ENCODE measurements at regions of chr15 and their contacts with region 1.

Region 1: GRCh38 chr15:91302588-91303439 is 202.8 kb downstream of the SV2B start:
- DNase-seq: peak; percentile 26
- H3K4me3 ChIP-seq: no peak overlapping the region
- H3K27ac ChIP-seq: no peak overlapping the region
- H3K4me1 ChIP-seq: no peaks in the 10 kb centered on the region
- H3K27me3 ChIP-seq: no peaks in the 10 kb centered on the region
- CTCF ChIP-seq: peak; percentile 59

Region 2: DNA sequence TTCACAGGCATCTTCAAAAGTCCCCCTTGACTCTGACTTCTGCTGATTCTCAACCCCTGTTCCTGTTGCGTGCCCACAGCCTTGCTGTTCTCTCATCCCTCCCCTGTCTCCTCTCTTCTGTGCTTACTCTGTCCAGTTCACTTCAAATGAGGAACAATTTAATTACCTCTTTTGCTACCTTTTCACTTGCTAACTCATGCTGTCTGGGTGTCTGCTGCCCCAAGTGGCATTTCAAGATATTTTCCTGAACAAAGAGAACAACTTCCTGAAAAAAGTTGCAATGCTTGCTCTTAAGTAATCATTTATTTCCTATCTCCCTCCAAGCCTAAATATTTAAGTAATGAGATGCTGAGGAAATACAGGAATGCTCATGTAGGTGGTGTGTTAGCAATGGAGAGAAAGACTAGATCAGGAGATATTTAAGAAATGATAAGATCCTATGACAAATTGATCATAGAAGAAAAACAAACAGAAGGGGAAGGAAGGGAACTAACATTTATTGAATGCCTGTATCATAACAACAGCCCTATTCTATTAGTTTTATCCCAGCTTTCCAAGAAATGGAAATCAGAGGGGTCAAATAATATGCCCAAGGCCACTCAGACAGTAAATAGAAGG is 160.6 kb before region 1 on chr15:
- intact Hi-C with region 1: no loop called
- DNase-seq: no peak
- H3K4me3 ChIP-seq: no peak overlapping the region
- H3K27ac ChIP-seq: no peak overlapping the region
- H3K4me1 ChIP-seq: no peaks in the 10 kb centered on the region
- H3K27me3 ChIP-seq: no peaks in the 10 kb centered on the region
- CTCF ChIP-seq: peak; percentile 28

Region 3: DNA sequence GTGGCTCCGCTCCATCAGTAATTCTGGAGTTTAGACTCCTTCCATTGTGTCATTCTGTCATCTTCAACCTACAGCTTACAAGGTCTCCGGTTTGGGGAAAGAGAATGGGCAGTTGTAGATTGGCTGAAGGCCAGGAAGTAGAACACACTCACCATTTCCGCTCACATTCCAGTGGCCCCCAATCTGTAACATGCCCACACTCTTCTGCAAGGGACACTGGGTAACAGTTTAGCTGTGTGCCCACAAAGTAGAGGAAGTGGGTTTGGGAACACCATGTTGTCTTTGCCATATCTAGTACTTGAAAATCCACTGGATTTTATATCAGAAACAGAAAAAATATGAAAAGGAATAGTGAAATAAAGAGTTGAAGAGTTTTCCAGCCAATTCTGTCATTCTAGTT is 49.2 kb before region 1 on chr15:
- intact Hi-C with region 1: no loop called
- DNase-seq: no peak
- H3K4me3 ChIP-seq: no peak overlapping the region
- H3K27ac ChIP-seq: no peak overlapping the region
- H3K4me1 ChIP-seq: no peaks in the 10 kb centered on the region
- H3K27me3 ChIP-seq: no peaks in the 10 kb centered on the region
- CTCF ChIP-seq: no peak

Region 4: GRCh38 chr15:91522663-91523332 is 220.0 kb after region 1 on chr15:
- intact Hi-C with region 1: loop called (anchors 10 kb)
- DNase-seq: no peak
- H3K4me3 ChIP-seq: no peak overlapping the region
- H3K27ac ChIP-seq: no peak overlapping the region
- H3K4me1 ChIP-seq: no peaks in the 10 kb centered on the region
- H3K27me3 ChIP-seq: no peaks in the 10 kb centered on the region
- CTCF ChIP-seq: no peak

Region 5: GRCh38 chr15:91852741-91853510 is 550.1 kb after region 1 on chr15:
- intact Hi-C with region 1: loop called (anchors 5 kb)
- DNase-seq: peak; percentile 75
- H3K4me3 ChIP-seq: peak overlapping the region; percentile 68
- H3K27ac ChIP-seq: peak overlapping the region; percentile 77
- H3K4me1 ChIP-seq: no peaks in the 10 kb centered on the region
- H3K27me3 ChIP-seq: no peaks in the 10 kb centered on the region
- CTCF ChIP-seq: peak; percentile 55

Region 6: DNA sequence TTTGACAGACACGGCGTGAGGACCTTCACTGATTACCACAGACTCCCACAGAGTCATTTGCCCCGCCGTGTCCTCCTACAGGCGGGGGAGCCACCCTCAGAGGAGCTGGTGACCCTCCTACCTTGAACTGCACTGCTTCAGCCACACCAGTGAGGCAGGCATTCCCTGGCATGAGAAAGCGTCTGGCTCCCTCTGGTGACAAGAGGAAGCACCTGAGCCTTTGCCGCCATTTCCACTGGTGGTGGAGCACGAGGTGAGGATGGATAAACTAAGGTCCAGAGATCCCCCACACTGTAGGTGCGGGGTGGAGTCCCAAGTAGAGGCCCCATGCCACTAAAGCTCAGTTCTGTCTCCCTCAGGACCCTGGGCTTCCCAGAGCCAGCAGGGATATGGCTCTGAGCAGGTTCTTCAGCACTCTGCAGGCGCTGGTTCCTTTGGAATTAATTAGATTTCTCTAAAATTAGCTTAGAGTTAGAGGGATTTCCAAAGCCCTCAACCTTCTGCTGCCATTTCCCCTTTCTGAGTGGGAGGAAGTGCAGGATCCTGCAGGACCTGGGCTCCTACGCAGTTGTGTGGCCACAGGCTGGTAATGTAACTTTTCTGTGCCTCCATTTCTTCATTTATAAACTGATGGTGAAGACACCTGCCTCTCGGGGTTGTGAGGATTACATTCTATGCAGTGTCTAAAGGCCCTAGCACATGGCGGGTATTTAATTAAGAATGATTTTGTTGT is 774.7 kb after region 1 on chr15:
- intact Hi-C with region 1: loop called (anchors 2 kb)
- DNase-seq: peak; percentile 78
- H3K4me3 ChIP-seq: no peak overlapping the region
- H3K27ac ChIP-seq: no peak overlapping the region
- H3K4me1 ChIP-seq: no peaks in the 10 kb centered on the region
- H3K27me3 ChIP-seq: no peaks in the 10 kb centered on the region
- CTCF ChIP-seq: peak; percentile 64

Measured in colonic mucosa (tissue), 4 donors.